Activated B cell treated with CpG ODN at 0.5 μM for 24 hours (primary cell): ENCODE measurements at regions of chr17 and their contacts with region 1.

Region 1: GRCh38 chr17:63881876-63882601 is at the start of gene GH2:
- DNase-seq: peak; percentile 36
- ATAC-seq: peak; percentile 89
- H3K4me3 Mint-ChIP-seq: no peak within 1 kb of the TSS
- H3K27ac Mint-ChIP-seq: no peak within 1 kb of the TSS
- H3K4me1 Mint-ChIP-seq: peaks cover 11% of the 10 kb centered on the region
- H3K27me3 Mint-ChIP-seq: no peaks in the 10 kb centered on the region
- CTCF ChIP-seq: no peak
- total RNA-seq, gene GH2: not detected in 2 replicates

Region 2: DNA sequence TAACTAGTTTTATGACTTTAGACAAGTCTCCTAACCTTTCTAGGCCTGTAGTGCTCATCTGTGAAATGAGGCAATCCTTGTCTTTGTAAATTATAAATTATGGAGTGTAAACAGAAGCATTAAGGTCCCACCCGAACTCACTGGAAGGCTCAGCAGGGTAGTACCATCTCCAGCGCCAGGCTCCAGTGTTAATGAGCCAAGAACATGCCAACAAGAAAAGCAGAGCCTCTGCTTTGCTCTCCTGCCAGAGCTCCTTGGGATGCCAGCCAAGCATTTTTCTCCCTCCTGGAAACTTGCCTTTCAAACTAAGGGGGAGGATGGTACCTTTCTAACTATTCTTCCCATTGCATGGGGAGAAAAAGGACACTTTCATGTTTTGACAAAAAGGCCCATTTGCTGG is 197.0 kb before region 1 on chr17:
- CTCF ChIA-PET with region 1: no interaction called
- POLR2A ChIA-PET with region 1: no interaction called
- intact Hi-C with region 1: no loop called
- DNase-seq: no peak
- ATAC-seq: no peak
- H3K4me3 Mint-ChIP-seq: no peak overlapping the region
- H3K27ac Mint-ChIP-seq: no peak overlapping the region
- H3K4me1 Mint-ChIP-seq: peaks cover 3% of the 10 kb centered on the region
- H3K27me3 Mint-ChIP-seq: no peaks in the 10 kb centered on the region
- CTCF ChIP-seq: no peak

Region 3: DNA sequence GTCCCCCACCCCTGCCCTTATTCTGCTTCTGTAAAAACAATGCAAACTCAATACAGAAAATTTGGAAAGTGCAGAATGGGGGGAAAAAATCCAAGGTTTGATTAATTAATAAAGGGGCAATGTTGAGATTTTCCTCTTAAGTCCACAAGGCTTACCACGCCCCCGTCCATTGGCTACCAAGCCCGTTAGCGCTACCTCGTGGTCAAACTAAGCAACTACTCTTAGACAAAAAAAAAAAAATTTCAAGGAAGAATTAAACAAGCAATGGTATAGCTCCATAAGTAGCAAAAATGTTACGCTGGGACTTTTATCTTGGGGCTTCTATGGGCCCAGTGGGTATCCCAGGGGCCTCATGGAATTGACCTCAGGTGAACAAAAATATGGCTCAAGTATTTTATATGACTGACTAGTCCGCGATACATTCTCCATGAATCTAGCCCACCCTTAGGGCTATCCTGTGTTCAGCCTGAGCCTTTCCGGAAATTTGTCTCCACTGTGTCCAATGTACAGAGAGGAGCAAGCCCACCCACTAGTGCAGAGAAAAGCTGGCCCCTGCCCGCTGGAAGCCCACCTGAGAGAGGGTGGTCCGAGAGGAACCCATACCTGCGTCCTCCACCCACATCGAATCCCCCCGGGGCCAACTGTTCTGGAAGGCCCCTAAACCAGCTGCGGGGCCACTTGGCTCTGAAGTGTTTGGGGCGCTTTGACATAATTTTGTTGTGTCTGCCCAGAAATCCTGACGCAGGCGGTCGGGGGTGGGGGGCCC is 400.1 kb after region 1 on chr17:
- CTCF ChIA-PET with region 1: no interaction called
- POLR2A ChIA-PET with region 1: no interaction called
- intact Hi-C with region 1: loop called (anchors 5 kb)
- DNase-seq: no peak
- ATAC-seq: peak; percentile 58
- H3K4me3 Mint-ChIP-seq: no peak overlapping the region
- H3K27ac Mint-ChIP-seq: no peak overlapping the region
- H3K4me1 Mint-ChIP-seq: no peaks in the 10 kb centered on the region
- H3K27me3 Mint-ChIP-seq: no peaks in the 10 kb centered on the region
- CTCF ChIP-seq: no peak

Region 4: DNA sequence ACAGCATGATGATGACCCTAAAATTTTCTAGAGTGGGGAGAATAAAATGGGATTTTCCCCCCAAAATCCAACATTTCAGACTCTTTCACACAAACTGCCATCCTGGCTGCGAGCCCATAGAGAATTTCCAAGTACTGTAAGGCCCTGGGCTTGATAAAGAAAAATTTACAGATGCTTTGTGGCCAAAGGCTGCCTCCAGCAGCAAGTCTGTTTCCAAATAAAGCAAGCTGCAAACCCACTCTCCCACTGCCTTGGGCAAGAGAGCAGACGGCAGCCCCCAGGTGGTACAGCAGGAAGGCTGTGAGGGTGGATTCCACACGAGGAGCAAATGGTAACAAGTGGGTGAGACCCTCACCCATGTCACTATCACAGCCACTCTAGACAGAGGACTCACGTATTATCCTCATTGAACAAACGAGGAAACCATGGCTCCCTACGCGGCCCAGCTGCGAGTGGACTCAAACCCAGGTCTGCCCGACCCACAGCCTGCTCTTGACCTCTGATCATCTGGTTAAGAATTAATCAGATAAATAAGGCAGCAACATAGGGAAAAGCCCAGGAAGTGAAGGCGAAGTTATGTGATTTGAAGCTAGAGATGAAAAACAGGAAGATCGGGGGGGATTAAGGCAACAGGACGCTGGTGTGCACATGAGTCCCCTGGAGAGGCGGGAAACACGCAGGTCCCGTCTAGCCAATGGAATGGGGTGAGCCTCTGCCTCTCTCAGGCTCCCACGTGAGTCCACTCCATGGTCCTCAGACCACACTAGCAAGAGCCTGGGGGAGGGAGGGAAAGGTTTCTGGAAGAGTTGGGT is 1642.0 kb after region 1 on chr17:
- CTCF ChIA-PET with region 1: no interaction called
- POLR2A ChIA-PET with region 1: no interaction called
- intact Hi-C with region 1: no loop called
- DNase-seq: no peak
- ATAC-seq: no peak
- H3K4me3 Mint-ChIP-seq: no peak overlapping the region
- H3K27ac Mint-ChIP-seq: no peak overlapping the region
- H3K4me1 Mint-ChIP-seq: no peaks in the 10 kb centered on the region
- H3K27me3 Mint-ChIP-seq: no peaks in the 10 kb centered on the region
- CTCF ChIP-seq: no peak